CD4-positive, alpha-beta memory T cell (primary cell): ENCODE measurements at regions of chr9 and their contacts with region 1.

Region 1: DNA sequence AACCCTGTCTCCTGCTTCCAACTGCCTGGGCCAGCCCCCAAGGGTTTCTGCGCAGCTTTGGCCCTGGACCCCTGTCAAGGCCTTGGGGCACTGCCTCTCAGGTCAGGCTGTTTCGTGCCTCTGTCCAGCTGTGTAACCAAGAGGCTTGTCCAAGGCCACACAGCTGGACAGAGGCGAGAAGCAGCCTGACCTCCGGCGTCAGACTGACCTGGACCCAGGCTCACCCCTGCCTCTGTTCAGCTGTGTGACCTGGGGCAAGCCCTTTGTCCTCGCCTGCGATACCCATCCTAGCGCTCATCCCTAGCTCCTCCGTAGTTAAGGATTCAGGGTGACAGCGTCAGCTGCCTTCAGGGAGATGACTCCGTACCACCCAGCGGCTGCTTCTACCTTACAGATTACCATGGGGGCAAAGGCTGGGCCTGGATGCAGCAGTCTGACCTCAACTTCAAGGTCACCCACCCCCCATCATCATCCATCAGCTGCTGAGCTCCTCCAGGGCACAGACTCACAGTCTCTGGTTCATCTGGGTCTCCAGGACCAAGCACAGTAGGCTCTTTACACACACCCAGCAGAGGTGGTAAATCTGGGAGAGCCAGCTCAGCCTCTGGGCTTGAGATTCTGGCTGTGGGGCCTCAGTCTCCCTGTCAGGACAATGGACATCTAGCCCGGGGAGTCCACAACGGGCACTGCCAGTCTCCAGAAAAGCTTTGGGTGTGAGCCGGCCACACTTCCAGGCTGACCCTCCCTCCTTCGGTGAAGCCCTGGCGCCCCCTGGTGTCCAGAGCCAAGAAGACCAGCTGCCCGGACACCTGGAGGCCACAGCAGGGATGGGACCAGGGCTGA is 7.9 kb downstream of the AK1 start:
- DNase-seq: peak; percentile 61 to 76 (median 63)
- H3K4me3 ChIP-seq: no peak overlapping the region
- H3K4me3 Mint-ChIP-seq: no peak overlapping the region
- H3K27ac ChIP-seq: no peak overlapping the region
- H3K27ac Mint-ChIP-seq: peak overlapping the region in 2 of 7 donors; percentile 31 to 53
- H3K4me1 ChIP-seq: peaks cover 20% of the 10 kb centered on the region
- H3K4me1 Mint-ChIP-seq: peaks cover 13 to 20% (median 15%) of the 10 kb centered on the region in 4 donors
- H3K27me3 ChIP-seq: no peaks in the 10 kb centered on the region
- H3K27me3 Mint-ChIP-seq: no peaks in the 10 kb centered on the region

Region 2: DNA sequence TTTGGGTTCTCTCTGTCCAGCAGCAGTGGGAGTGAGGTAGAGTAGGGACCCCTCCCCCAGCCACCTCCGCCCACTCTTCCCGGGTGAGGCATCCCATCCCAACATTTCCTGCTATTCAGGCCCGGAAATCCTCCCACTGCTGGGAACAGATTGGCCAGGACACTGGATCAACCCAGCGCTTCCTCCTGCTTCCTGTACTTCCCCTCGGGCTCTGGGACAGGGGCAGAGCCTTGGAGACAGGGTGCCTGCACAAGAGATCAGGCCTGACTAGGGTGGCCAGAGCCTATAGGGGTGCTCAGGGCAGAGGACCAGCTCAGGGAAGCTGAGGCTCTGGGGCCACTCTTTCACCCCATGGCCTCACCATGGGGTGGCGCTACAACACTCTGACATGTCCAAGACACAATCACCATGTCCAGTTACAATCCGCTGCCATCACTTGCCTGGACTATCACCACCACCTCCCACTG is 105.6 kb before region 1 on chr9:
- CTCF ChIA-PET with region 1: interaction called, 24 read pairs
- POLR2A ChIA-PET with region 1: no interaction called
- intact Hi-C with region 1: no loop called
- DNase-seq: no peak
- H3K4me3 ChIP-seq: no peak overlapping the region
- H3K4me3 Mint-ChIP-seq: peak overlapping the region in 1 of 8 donors; percentile 6
- H3K27ac ChIP-seq: peak overlapping the region; percentile 24
- H3K27ac Mint-ChIP-seq: peak overlapping the region; percentile 22 to 98 (median 84)
- H3K4me1 ChIP-seq: peaks cover 52% of the 10 kb centered on the region
- H3K4me1 Mint-ChIP-seq: peaks cover 39 to 67% (median 56%) of the 10 kb centered on the region in 4 donors
- H3K27me3 ChIP-seq: no peaks in the 10 kb centered on the region
- H3K27me3 Mint-ChIP-seq: no peaks in the 10 kb centered on the region

Region 3: DNA sequence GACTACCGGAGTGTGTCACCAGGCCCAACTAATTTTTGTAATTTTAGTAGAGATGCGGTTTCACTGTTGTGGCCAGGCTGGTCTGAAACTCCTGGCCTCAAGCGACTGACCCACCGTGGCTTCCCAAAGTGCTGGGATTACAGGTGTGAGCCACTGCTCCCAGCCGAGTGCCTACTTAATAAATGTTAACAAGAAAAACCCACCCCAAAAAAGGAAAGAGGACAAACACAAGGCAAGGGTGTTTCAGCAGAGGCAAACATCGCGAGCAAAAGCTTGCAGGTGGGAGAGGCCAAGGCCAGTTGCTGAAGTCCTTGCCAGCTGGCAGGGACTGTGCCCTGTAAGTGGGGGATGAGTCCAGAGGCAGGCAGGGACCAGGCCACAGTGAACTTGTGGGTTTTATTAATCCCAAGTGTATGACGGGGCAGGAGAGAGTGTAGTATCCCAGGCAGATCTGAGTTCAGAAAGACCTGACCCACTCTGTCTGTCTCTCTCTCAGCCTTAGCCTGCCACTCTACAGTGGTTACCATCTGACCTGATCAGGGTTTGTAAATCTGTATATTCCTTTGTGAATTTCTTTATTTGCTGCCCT is 73.2 kb before region 1 on chr9:
- CTCF ChIA-PET with region 1: interaction called, 13 read pairs
- POLR2A ChIA-PET with region 1: interaction called, 3 read pairs
- intact Hi-C with region 1: loop called (anchors 5 kb)
- DNase-seq: no peak
- H3K4me3 ChIP-seq: no peak overlapping the region
- H3K4me3 Mint-ChIP-seq: peak overlapping the region in 6 of 8 donors; percentile 62 to 89 (median 74)
- H3K27ac ChIP-seq: no peak overlapping the region
- H3K27ac Mint-ChIP-seq: peak overlapping the region; percentile 58 to 93 (median 87)
- H3K4me1 ChIP-seq: peaks cover 23% of the 10 kb centered on the region
- H3K4me1 Mint-ChIP-seq: peaks cover 12 to 32% (median 23%) of the 10 kb centered on the region in 4 donors
- H3K27me3 ChIP-seq: no peaks in the 10 kb centered on the region
- H3K27me3 Mint-ChIP-seq: no peaks in the 10 kb centered on the region

Region 4: DNA sequence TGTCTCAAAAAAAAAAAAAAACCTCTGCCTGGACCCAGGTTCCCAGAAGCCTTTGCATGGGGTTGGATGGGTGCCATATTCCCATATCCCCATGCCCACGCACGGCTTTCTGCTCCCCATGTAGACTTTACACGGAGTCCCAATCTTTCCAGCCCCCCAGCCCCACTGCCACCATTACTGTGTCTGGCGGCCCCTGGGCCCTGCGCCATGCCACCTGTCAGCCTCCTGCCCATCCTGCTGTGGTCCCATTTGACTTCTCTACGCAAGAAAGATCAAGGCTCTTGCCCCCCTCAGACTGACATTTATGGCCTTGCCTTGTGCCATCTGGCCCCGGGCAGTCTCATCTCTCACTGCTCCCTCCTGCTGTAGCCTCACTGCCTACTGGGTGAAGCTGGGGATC is 14.4 kb after region 1 on chr9:
- CTCF ChIA-PET with region 1: interaction called, 16 read pairs
- POLR2A ChIA-PET with region 1: no interaction called
- intact Hi-C with region 1: no loop called
- DNase-seq: no peak
- H3K4me3 ChIP-seq: no peak overlapping the region
- H3K4me3 Mint-ChIP-seq: no peak overlapping the region
- H3K27ac ChIP-seq: no peak overlapping the region
- H3K27ac Mint-ChIP-seq: peak overlapping the region in 5 of 7 donors; percentile 19 to 72 (median 52)
- H3K4me1 ChIP-seq: no peaks in the 10 kb centered on the region
- H3K4me1 Mint-ChIP-seq: peaks cover 0 to 16% (median 9%) of the 10 kb centered on the region in 4 donors
- H3K27me3 ChIP-seq: no peaks in the 10 kb centered on the region
- H3K27me3 Mint-ChIP-seq: no peaks in the 10 kb centered on the region

Region 5: GRCh38 chr9:127910613-127911205 is 41.2 kb after region 1 on chr9:
- CTCF ChIA-PET with region 1: interaction called, 15 read pairs
- POLR2A ChIA-PET with region 1: interaction called, 6 read pairs
- intact Hi-C with region 1: loop called (anchors 5 kb)
- DNase-seq: no peak
- H3K4me3 ChIP-seq: no peak overlapping the region
- H3K4me3 Mint-ChIP-seq: peak overlapping the region in 1 of 8 donors; percentile 46
- H3K27ac ChIP-seq: no peak overlapping the region
- H3K27ac Mint-ChIP-seq: peak overlapping the region; percentile 67 to 96 (median 82)
- H3K4me1 ChIP-seq: peaks cover 38% of the 10 kb centered on the region
- H3K4me1 Mint-ChIP-seq: peaks cover 11 to 53% (median 29%) of the 10 kb centered on the region in 4 donors
- H3K27me3 ChIP-seq: no peaks in the 10 kb centered on the region
- H3K27me3 Mint-ChIP-seq: no peaks in the 10 kb centered on the region